PC-3 (cell line): ENCODE measurements at regions of chr2 and their contacts with region 1.

Region 1: DNA sequence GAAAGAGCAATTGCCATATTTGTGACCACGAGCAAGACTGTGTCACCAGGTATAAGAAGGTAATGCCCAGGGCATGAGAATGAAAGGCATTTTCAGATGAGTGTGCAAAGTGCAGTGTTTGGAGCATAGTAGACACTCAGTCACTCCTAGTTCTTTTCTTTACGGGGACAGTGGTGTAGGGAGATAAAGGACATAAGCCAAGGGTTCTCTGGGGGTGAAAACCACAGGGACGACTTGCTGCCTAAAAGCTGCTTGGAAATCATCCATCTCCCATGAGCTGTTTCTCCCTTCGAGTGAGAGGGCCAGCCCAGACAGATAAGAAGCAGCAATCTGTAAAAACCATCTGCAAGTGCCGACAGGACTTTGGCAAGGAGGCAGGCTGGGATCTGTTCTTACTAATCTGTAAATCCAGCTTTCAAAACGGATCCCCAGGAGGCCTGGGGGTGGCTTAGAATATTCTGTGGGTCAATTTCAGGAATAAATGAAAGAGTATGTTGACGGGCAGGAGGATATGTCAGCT is 221.6 kb downstream of the LPIN1 start:
- DNase-seq: no peak
- ATAC-seq: no peak
- H3K4me3 ChIP-seq: no peak overlapping the region
- H3K27ac ChIP-seq: no peak overlapping the region
- H3K4me1 ChIP-seq: no peaks in the 10 kb centered on the region
- H3K27me3 ChIP-seq: no peaks in the 10 kb centered on the region
- CTCF ChIP-seq: no peak

Region 2: GRCh38 chr2:12120281-12121150 is 152.5 kb after region 1 on chr2:
- CTCF ChIA-PET with region 1: no interaction called
- POLR2A ChIA-PET with region 1: no interaction called
- intact Hi-C with region 1: no loop called
- DNase-seq: peak; percentile 84
- ATAC-seq: peak; percentile 88
- H3K4me3 ChIP-seq: no peak overlapping the region
- H3K27ac ChIP-seq: peak overlapping the region; percentile 71
- H3K4me1 ChIP-seq: peaks cover 24% of the 10 kb centered on the region
- H3K27me3 ChIP-seq: no peaks in the 10 kb centered on the region
- CTCF ChIP-seq: no peak

Region 3: GRCh38 chr2:12501469-12502158 is 533.6 kb after region 1 on chr2:
- CTCF ChIA-PET with region 1: interaction called, 13 read pairs
- POLR2A ChIA-PET with region 1: no interaction called
- intact Hi-C with region 1: no loop called
- DNase-seq: peak; percentile 27
- ATAC-seq: no peak
- H3K4me3 ChIP-seq: no peak overlapping the region
- H3K27ac ChIP-seq: no peak overlapping the region
- H3K4me1 ChIP-seq: peaks cover 33% of the 10 kb centered on the region
- H3K27me3 ChIP-seq: no peaks in the 10 kb centered on the region
- CTCF ChIP-seq: no peak